Activated CD4-positive, alpha-beta T cell treated with anti-CD3 and anti-CD28 coated beads for 36 hours (primary cell): ENCODE measurements at regions of chr3 and their contacts with region 1.

Region 1: GRCh38 chr3:112519424-112520001 is 20.2 kb upstream of the BTLA start:
- DNase-seq: peak; percentile 37
- ATAC-seq: peak; percentile 77
- H3K4me3 Mint-ChIP-seq: no peak overlapping the region
- H3K27ac Mint-ChIP-seq: no peak overlapping the region
- H3K4me1 Mint-ChIP-seq: peaks cover 22% of the 10 kb centered on the region
- H3K27me3 Mint-ChIP-seq: no peaks in the 10 kb centered on the region

Region 2: DNA sequence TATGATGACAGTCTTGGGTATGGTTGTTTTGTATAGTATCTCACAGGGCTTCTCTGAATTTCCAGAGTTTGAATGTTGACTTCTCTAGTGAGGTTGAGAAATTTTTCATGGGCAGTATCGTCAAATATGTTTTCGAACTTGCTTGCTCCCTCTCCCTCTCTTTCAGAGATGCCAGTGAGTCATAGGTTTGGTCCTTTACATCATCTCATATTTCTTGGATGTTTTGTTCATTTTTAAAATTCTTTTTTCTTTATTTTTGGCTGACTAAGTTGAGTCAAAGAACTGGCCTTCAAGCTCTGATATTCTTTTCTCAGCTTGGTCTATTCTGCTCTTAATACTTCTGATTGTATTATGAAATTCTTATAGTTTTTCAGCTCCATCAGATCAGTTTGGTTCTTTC is 1730.2 kb before region 1 on chr3:
- CTCF ChIA-PET with region 1: no interaction called
- POLR2A ChIA-PET with region 1: no interaction called
- intact Hi-C with region 1: no loop called
- DNase-seq: no peak
- ATAC-seq: no peak
- H3K4me3 Mint-ChIP-seq: no peak overlapping the region
- H3K27ac Mint-ChIP-seq: no peak overlapping the region
- H3K4me1 Mint-ChIP-seq: no peaks in the 10 kb centered on the region
- H3K27me3 Mint-ChIP-seq: peaks cover 9% of the 10 kb centered on the region

Region 3: GRCh38 chr3:112111785-112112402 is 407.6 kb before region 1 on chr3:
- CTCF ChIA-PET with region 1: interaction called, 13 read pairs
- POLR2A ChIA-PET with region 1: no interaction called
- intact Hi-C with region 1: loop called (anchors 1 kb)
- DNase-seq: peak; percentile 73
- ATAC-seq: peak; percentile 94
- H3K4me3 Mint-ChIP-seq: no peak overlapping the region
- H3K27ac Mint-ChIP-seq: no peak overlapping the region
- H3K4me1 Mint-ChIP-seq: peaks cover 12% of the 10 kb centered on the region
- H3K27me3 Mint-ChIP-seq: no peaks in the 10 kb centered on the region

Region 4: DNA sequence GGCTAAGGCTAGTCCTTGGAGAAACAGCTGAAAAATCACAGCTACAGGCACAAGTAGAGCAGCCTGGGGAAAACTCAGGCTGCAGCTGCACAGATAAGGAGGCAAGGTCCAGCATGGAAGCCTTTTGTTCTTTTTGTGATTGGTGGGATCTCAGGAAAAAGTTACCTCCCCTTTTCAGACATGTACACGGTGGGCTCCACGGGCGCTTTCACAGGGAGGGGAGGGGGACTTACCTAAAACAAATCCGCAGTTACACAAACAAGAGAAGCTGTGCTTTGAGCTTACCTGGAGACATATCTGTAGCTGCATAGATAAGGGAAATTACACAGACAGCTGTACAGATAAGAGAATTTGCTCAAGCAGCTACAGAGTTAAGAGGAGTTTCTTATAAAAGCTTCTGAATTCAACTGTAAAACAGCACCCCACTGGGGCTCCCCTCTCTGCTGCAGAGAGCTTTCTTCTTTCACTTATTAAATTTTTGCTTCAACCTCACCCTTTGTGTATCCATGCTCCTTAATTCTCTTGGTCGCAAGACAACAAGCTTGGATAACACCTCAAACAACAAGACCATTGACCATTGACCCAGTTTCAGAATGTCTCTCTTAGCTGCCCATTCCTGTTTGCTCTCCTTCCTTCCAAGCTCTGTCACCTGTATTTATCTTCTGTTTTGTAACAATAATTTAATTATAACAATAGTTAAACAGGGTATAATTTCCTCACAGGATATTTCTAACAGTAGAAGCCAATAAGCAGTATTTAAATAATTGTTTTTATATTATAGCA is 197.5 kb before region 1 on chr3:
- CTCF ChIA-PET with region 1: interaction called, 10 read pairs
- POLR2A ChIA-PET with region 1: no interaction called
- intact Hi-C with region 1: loop called (anchors 1 kb)
- DNase-seq: no peak
- ATAC-seq: no peak
- H3K4me3 Mint-ChIP-seq: no peak overlapping the region
- H3K27ac Mint-ChIP-seq: no peak overlapping the region
- H3K4me1 Mint-ChIP-seq: peaks cover 6% of the 10 kb centered on the region
- H3K27me3 Mint-ChIP-seq: peaks cover 7% of the 10 kb centered on the region

Region 5: GRCh38 chr3:112384769-112385168 is 134.7 kb before region 1 on chr3:
- CTCF ChIA-PET with region 1: no interaction called
- POLR2A ChIA-PET with region 1: no interaction called
- intact Hi-C with region 1: no loop called
- DNase-seq: no peak
- ATAC-seq: peak; percentile 72
- H3K4me3 Mint-ChIP-seq: no peak overlapping the region
- H3K27ac Mint-ChIP-seq: peak overlapping the region; percentile 33
- H3K4me1 Mint-ChIP-seq: peaks cover 48% of the 10 kb centered on the region
- H3K27me3 Mint-ChIP-seq: no peaks in the 10 kb centered on the region

Region 6: DNA sequence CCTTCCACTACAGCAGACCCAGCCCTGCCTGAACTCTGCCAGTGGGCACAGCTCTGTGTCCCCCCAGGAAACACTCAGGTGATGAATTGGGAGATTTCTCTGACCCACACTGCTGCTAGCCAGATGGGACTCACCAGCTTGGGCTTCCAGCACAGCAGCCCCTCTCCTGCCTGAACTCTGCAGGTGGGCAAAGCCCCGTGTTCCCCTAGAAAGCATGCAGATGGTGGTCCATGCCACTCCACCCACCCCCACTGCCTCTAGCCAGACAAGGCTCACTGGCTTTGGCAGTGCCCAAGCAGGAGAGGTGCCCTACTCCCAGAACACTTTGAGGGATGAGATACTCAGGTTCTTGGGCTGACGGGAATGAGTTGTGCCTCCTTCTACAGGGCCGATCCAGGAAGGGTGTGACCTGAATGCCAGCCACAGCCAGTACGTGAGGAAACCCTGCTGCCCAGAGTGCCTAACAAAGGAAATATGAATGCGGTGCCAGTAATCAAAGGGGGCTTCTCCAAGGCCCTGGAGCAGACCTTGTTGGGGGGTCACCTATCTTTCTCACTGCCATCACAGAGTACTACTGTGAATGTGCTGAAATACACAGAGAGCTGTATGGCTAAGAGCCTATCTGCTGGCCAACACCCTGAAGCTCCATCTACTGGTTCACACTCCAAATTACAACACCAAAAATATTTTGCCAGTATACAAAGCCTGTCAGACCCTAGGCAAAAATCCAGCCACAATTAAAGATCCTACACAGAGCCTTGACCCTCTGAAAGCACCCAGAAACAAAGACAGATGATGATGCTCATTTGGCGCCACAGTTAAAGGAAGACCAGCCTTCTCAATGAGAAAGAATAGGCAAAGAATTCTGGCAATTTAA is 82.1 kb before region 1 on chr3:
- CTCF ChIA-PET with region 1: interaction called, 4 read pairs
- POLR2A ChIA-PET with region 1: no interaction called
- intact Hi-C with region 1: loop called in 1 of 2 experiments (anchors 2 kb)
- DNase-seq: peak; percentile 22
- ATAC-seq: peak; percentile 92
- H3K4me3 Mint-ChIP-seq: no peak overlapping the region
- H3K27ac Mint-ChIP-seq: peak overlapping the region; percentile 64
- H3K4me1 Mint-ChIP-seq: peaks cover 39% of the 10 kb centered on the region
- H3K27me3 Mint-ChIP-seq: no peaks in the 10 kb centered on the region

Region 7: GRCh38 chr3:112498914-112499711 is 20.4 kb before region 1 on chr3 and contains the start of gene BTLA:
- CTCF ChIA-PET with region 1: interaction called, 9 read pairs
- POLR2A ChIA-PET with region 1: no interaction called
- intact Hi-C with region 1: loop called in 1 of 2 experiments (anchors 1 kb)
- DNase-seq: peak; percentile 58
- ATAC-seq: peak; percentile 70
- H3K4me3 Mint-ChIP-seq: peak within 1 kb of the TSS; percentile 97
- H3K27ac Mint-ChIP-seq: peak within 1 kb of the TSS; percentile 100
- H3K4me1 Mint-ChIP-seq: peaks cover 54% of the 10 kb centered on the region
- H3K27me3 Mint-ChIP-seq: no peaks in the 10 kb centered on the region
- total RNA-seq, gene BTLA: 21.0 to 21.7 TPM

Region 8: DNA sequence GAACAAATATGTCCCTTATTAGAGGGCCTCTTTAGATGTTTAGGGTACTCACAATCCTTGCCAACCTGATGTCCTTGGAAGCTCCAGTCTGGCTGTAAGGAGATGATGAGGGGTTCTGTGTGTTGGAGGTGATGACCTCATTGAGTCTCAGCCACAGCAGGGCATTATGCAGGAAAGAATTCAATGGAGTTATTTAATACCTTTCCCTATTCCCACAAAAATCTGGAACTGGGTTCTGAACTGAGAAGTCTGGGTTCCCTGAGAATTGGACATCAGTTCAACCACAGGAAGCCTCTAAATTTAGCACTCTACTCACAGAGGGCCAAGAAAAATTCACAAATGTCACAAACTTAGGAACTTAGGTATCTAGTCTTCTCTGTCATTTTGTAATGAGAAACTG is 79.2 kb after region 1 on chr3:
- CTCF ChIA-PET with region 1: no interaction called
- POLR2A ChIA-PET with region 1: no interaction called
- intact Hi-C with region 1: no loop called
- DNase-seq: no peak
- ATAC-seq: no peak
- H3K4me3 Mint-ChIP-seq: no peak overlapping the region
- H3K27ac Mint-ChIP-seq: no peak overlapping the region
- H3K4me1 Mint-ChIP-seq: peaks cover 16% of the 10 kb centered on the region
- H3K27me3 Mint-ChIP-seq: no peaks in the 10 kb centered on the region

Region 9: GRCh38 chr3:112610121-112610520 is 90.6 kb after region 1 on chr3:
- CTCF ChIA-PET with region 1: no interaction called
- POLR2A ChIA-PET with region 1: no interaction called
- intact Hi-C with region 1: no loop called
- DNase-seq: no peak
- ATAC-seq: no peak
- H3K4me3 Mint-ChIP-seq: no peak overlapping the region
- H3K27ac Mint-ChIP-seq: no peak overlapping the region
- H3K4me1 Mint-ChIP-seq: peaks cover 5% of the 10 kb centered on the region
- H3K27me3 Mint-ChIP-seq: no peaks in the 10 kb centered on the region